Activated T-helper 1 cell treated with anti-CD3 and anti-CD28 coated beads, Interleukin-12 subunit alpha, Interleukin-12 subunit beta, Interleukin-2, Interleukin-4 antibody, amounts not matched to agents 30 ng/mL and 10 ng/mL and 1 ng/mL, durations not matched to agents 14 hours and 24 hours and 36 hours (primary cell): ENCODE measurements at regions of chr6 and their contacts with region 1.

Region 1: GRCh38 chr6:158649289-158650143 is at the start of gene SYTL3:
- DNase-seq: peak; percentile 82
- H3K4me3 Mint-ChIP-seq: peak within 1 kb of the TSS; percentile 87
- H3K27ac Mint-ChIP-seq: peak within 1 kb of the TSS; percentile 93
- H3K4me1 Mint-ChIP-seq: peaks cover 74% of the 10 kb centered on the region
- H3K27me3 Mint-ChIP-seq: no peaks in the 10 kb centered on the region
- total RNA-seq, gene SYTL3: 123 and 139 TPM in 2 replicates

Region 2: DNA sequence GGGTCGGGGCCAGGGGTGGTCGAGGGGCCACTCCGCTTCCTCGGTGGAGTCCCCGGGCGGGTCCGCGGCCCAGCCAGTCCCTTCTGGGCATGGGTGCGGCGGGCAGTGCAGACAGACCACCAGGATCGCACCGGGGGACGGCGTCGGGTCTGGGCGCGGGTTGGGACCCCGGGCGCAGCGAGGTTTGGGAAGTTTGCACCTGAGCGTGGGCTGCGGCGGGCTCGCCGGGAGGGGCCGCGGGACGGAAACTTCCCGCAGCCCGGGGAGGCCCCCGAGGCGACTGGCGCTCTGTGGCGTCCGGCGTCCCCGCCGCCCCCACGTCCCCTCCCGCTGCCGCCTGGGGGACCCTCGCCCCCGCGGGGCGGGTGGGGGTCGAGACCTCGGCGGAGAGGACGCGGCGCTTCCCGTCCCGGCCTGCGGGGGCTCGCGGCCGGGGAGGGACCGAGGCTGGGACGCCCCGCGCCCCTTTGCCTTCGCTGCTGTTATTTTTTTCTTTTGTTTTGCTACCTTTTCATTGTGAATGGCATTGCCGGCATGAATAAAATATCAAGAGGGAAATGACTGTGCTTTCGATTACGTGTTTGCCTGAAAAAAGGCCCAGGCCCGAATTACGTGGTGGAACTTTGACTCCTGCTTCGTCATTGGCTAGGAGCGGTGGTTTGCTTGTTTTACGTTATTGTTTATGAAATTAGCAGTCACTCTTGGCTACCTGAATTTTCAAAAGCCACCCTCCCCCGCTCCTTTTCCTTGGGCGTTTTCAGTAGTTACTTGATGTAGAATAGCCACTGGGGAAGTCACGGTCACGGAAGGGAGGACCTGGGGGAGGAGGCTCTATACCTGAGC is 825.8 kb before region 1 on chr6:
- intact Hi-C with region 1: loop called (anchors 2 kb)
- DNase-seq: peak; percentile 72
- H3K4me3 Mint-ChIP-seq: peak overlapping the region; percentile 93
- H3K27ac Mint-ChIP-seq: peak overlapping the region; percentile 97
- H3K4me1 Mint-ChIP-seq: peaks cover 47% of the 10 kb centered on the region
- H3K27me3 Mint-ChIP-seq: peaks cover 34% of the 10 kb centered on the region

Region 3: DNA sequence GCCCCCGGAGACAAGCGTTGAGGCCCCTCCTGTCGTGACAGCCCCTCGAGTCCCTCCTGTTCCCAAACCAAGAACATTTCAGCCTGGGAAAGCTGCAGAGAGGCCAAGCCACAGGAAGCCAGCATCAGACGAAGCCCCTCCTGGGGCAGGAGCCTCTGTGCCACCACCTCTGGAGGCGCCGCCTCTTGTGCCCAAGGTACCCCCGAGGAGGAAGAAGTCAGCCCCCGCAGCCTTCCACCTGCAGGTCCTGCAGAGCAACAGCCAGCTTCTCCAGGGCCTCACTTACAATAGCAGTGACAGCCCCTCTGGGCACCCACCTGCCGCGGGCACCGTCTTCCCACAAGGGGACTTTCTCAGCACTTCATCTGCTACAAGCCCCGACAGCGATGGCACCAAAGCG is 553.8 kb before region 1 on chr6:
- intact Hi-C with region 1: no loop called
- DNase-seq: no peak
- H3K4me3 Mint-ChIP-seq: no peak overlapping the region
- H3K27ac Mint-ChIP-seq: no peak overlapping the region
- H3K4me1 Mint-ChIP-seq: no peaks in the 10 kb centered on the region
- H3K27me3 Mint-ChIP-seq: no peaks in the 10 kb centered on the region

Region 4: GRCh38 chr6:158686791-158687381 is 37.4 kb after region 1 on chr6:
- intact Hi-C with region 1: loop called (anchors 1 kb)
- DNase-seq: peak; percentile 61
- H3K4me3 Mint-ChIP-seq: peak overlapping the region; percentile 74
- H3K27ac Mint-ChIP-seq: peak overlapping the region; percentile 90
- H3K4me1 Mint-ChIP-seq: peaks cover 62% of the 10 kb centered on the region
- H3K27me3 Mint-ChIP-seq: no peaks in the 10 kb centered on the region

Region 5: DNA sequence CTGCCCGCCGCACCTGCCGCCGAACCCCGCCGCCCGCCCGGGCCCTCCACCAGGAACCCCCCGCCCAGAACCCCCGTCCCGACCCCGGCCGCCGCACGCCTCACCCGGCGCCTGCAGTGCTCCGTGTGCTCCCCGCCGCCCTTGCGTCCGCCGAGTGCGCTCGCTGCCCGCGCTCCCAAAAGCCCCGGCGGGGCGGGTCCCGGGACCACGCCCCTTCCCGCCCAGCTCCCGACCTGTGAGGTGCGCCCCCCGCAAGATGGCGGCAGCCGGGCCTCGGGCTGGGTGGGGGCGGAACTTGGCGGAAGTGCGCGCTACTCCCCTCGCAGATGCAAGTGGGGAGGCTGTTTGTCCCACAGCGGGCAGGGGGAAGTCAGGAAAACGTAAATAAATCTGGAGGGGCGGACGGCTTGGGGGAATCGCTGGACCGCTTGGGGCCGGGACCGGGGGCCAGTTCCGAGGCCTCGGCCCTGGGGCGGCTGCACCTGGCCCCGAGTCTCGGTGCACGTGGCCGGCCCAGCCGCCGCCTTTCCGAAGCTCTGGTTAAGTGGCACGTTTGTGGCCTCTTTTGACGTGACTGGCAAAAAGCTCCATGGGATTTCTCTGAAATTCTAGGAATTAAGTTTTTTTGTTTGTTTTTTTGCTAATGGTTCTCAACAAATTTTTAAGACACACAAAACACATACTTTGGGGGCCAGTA is 169.8 kb after region 1 on chr6 and contains the start of gene EZR:
- intact Hi-C with region 1: loop called (anchors 2 kb)
- DNase-seq: peak; percentile 71
- H3K4me3 Mint-ChIP-seq: peak within 1 kb of the TSS; percentile 79
- H3K27ac Mint-ChIP-seq: peak within 1 kb of the TSS; percentile 86
- H3K4me1 Mint-ChIP-seq: peaks cover 55% of the 10 kb centered on the region
- H3K27me3 Mint-ChIP-seq: no peaks in the 10 kb centered on the region
- total RNA-seq, gene EZR: 205 and 206 TPM in 2 replicates

Region 6: GRCh38 chr6:159017757-159018559 is 368.4 kb after region 1 on chr6:
- intact Hi-C with region 1: loop called (anchors 1 kb)
- DNase-seq: no peak
- H3K4me3 Mint-ChIP-seq: peak overlapping the region; percentile 38
- H3K27ac Mint-ChIP-seq: peak overlapping the region; percentile 92
- H3K4me1 Mint-ChIP-seq: peaks cover 29% of the 10 kb centered on the region
- H3K27me3 Mint-ChIP-seq: no peaks in the 10 kb centered on the region

Region 7: DNA sequence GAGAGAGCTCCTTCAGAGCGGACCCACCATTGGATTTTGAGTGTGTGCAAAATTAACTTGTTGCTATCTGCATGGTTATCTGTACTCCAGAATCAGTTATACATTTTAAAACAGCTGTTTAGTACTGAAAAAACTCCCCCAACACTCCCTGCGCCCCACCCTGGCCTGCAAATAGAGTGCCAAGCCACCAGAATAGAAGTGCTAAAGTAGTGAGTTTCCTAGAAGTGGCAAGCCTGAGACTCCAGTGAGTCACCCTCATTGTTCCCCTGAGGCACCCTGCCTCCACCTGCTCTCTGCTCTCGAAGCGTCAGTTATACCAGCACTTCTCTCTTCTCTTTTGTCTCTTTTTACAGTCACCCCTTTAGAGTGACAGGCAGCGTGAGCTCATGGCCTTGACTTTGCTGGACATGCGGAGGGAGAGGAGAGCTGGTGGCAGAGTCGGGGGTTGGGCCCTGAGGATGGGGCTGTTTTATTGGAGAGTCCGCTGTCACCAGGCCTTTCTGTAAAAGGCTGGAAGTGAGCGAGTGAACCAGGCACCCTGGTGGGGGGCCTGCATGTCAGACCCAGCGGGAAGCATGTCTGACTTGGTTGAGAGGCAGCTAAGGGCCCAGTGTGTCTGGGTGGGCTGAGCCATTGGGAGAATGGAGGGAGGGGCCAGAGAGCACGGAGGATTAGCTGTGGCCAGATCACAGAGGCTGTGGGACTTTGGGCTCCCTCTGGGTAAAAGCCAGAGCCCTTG is 1329.8 kb after region 1 on chr6:
- intact Hi-C with region 1: loop called (anchors 5 kb)
- DNase-seq: peak; percentile 58
- H3K4me3 Mint-ChIP-seq: peak overlapping the region; percentile 86
- H3K27ac Mint-ChIP-seq: peak overlapping the region; percentile 97
- H3K4me1 Mint-ChIP-seq: peaks cover 89% of the 10 kb centered on the region
- H3K27me3 Mint-ChIP-seq: no peaks in the 10 kb centered on the region